ENCODE measurements at regions of chr6 and their contacts with region 1.

Region 1: DNA sequence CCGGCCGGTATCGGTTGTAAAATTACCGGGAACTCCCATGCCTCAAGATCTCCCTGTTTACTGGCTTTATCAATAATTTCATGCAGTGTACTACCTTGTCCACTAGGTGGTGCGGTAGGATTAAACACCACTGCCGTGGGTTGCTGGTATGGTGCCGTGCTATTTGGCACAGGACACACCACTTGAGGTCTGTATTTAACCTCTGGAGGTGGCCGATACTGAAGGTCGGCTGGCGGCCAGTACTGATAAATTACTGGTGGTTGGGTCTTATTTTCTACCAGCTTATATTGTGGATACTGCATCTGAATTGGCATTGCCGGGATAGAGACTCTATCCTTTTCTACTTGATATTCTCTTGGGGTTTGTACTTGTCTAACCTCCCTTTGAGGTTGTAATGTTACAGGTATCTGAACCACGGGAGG is 14.3 kb upstream of the PTCRA start:
- DNase-seq: peak; percentile 80 to 93 (median 86)
- H3K4me3 ChIP-seq: peak overlapping the region in 1 of 4 donors; percentile 5
- H3K27ac ChIP-seq: no peak overlapping the region
- H3K4me1 ChIP-seq: peaks cover 0 to 7% of the 10 kb centered on the region in 2 donors
- H3K27me3 ChIP-seq: no peaks in the 10 kb centered on the region
- CTCF ChIP-seq: peak; percentile 85 to 95 (median 94)
- POLR2A ChIP-seq: no peak

Region 2: GRCh38 chr6:42996513-42996912 is 95.0 kb after region 1 on chr6:
- intact Hi-C with region 1: loop called in 1 of 2 experiments (anchors 10 kb)
- DNase-seq: no peak
- H3K4me3 ChIP-seq: no peak overlapping the region
- H3K27ac ChIP-seq: no peak overlapping the region
- H3K4me1 ChIP-seq: no peaks in the 10 kb centered on the region
- H3K27me3 ChIP-seq: no peaks in the 10 kb centered on the region
- CTCF ChIP-seq: peak in 1 of 6 experiments; percentile 16
- POLR2A ChIP-seq: no peak